Activated CD8-positive, alpha-beta memory T cell treated with anti-CD3 and anti-CD28 coated beads, Interleukin-2, amount 10 ng/mL, durations not matched to agents 7 days and 5 days (primary cell): ENCODE measurements at regions of chr17 and their contacts with region 1.

Region 1: DNA sequence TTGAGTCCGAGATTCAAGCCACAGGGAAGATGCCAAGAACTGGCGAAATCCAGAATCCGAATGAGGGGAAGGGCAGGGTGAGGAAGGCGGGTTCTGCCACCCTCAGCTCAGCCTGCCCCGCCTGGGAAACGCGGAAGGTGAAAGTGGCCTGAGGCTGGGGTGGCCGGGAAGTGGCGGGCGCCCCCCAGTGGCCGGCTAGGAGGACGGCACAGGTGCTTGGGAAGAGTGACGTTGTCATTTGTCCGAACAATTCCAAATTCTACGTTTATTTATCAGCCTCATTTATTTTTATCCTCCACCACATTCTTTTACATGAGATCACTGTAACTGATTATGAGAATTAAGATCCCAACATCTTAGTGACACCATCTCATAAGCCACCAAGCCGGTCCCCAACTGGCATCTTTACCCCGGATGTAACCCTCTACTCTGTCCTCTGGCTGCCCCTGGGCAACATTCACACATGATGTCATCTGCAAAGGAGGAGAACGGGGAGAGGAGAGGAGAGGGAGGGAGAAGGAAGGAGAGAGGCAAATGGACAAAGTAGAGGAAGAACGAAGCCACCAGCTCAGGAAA is 21.3 kb downstream of the SRCIN1 start:
- DNase-seq: peak; percentile 69
- ATAC-seq: peak; percentile 72
- H3K4me3 Mint-ChIP-seq: no peak overlapping the region
- H3K27ac Mint-ChIP-seq: no peak overlapping the region
- H3K4me1 Mint-ChIP-seq: peaks cover 14% of the 10 kb centered on the region
- H3K27me3 Mint-ChIP-seq: peaks cover 79% of the 10 kb centered on the region

Region 2: DNA sequence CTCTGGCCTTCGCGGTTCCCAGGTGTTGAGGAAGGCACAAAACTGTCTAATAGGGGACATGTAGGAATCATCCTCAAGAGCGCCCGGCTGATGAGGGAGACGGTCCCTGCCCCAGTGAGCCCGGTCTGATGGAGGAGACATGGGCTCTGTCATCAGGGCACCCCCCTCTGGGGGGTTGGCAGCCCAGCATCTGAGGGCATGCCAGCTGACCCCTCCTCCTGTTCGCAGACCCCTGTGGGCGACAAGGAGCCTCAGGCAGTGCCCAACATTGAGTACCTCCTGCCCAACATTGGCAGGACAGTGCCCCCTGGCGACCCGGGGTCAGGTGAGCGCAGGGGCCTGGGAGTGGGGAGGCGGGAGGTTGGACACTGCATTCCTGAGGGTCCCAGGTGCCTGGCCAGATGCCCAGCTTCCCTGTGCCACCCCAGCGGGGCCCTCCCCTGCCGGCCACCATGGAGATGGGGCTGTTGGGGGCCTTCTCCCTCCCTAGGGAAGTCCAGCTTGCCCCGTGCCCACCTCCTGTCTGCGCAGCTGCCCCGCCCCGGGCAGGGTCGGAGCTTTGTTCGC is 86.2 kb before region 1 on chr17:
- CTCF ChIA-PET with region 1: no interaction called
- DNase-seq: no peak
- ATAC-seq: no peak
- H3K4me3 Mint-ChIP-seq: no peak overlapping the region
- H3K27ac Mint-ChIP-seq: no peak overlapping the region
- H3K4me1 Mint-ChIP-seq: no peaks in the 10 kb centered on the region
- H3K27me3 Mint-ChIP-seq: no peaks in the 10 kb centered on the region

Region 3: DNA sequence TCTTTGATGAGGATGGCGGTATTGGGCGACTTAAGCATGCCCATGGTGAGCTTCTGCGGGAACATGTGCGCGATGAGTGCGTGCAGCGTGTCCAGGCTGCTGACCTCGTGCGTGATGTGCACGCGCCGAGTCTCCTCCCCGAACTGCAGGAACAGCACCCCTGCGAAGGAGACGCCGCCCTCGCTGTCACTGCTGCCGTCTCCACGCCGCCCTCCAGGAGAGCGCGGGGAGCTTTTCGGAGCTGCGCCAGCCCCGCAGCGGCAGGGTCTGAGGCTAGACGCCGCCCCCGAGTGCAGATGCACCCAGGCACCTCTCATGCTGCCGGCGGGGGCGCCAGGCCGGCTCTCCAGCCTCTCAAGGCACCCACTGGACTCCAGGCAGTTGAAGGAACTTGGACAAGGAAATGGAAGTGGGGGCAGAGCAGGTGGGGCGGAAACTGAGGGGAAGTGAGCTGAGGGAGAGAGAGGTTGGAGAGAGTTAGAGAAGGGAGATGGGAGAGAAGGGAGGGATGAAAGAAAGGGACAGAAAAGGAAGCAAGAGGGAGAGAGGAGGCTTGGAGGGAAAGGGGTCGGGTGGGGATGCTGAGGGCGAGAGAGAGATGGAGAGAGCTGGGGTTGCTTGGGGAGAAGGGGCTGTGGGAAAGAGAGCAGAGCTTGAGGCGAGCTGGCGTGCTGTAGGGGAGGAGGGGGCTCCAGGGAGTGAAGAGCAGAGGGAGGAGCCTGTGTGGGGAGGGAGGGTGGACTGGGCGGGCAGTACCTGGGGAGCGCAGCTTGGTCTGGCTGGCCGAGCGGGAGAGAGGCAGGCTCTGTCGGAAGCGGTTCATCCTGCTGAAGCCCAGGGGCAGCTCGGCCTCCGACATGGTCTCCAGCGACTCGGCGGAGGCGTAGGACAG is 20.8 kb before region 1 on chr17:
- CTCF ChIA-PET with region 1: interaction called, 184 read pairs
- DNase-seq: no peak
- ATAC-seq: no peak
- H3K4me3 Mint-ChIP-seq: no peak overlapping the region
- H3K27ac Mint-ChIP-seq: no peak overlapping the region
- H3K4me1 Mint-ChIP-seq: peaks cover 17% of the 10 kb centered on the region
- H3K27me3 Mint-ChIP-seq: peaks cover 83% of the 10 kb centered on the region

Region 4: GRCh38 chr17:38598536-38598935 is 14.1 kb after region 1 on chr17:
- CTCF ChIA-PET with region 1: interaction called, 19 read pairs
- DNase-seq: no peak
- ATAC-seq: no peak
- H3K4me3 Mint-ChIP-seq: no peak overlapping the region
- H3K27ac Mint-ChIP-seq: no peak overlapping the region
- H3K4me1 Mint-ChIP-seq: peaks cover 4% of the 10 kb centered on the region
- H3K27me3 Mint-ChIP-seq: peaks cover 91% of the 10 kb centered on the region

Region 5: GRCh38 chr17:38768417-38768816 is 184.0 kb after region 1 on chr17:
- CTCF ChIA-PET with region 1: no interaction called
- DNase-seq: no peak
- ATAC-seq: no peak
- H3K4me3 Mint-ChIP-seq: no peak overlapping the region
- H3K27ac Mint-ChIP-seq: no peak overlapping the region
- H3K4me1 Mint-ChIP-seq: no peaks in the 10 kb centered on the region
- H3K27me3 Mint-ChIP-seq: no peaks in the 10 kb centered on the region